Transverse colon (tissue), 4 donors: ENCODE measurements at regions of chr2 and their contacts with region 1.

Region 1: GRCh38 chr2:64330281-64331113 is 123.5 kb upstream of the LGALSL start:
- DNase-seq: peak; percentile 84
- H3K4me3 ChIP-seq: peak overlapping the region in 2 of 4 donors; percentile 7 to 44
- H3K27ac ChIP-seq: peak overlapping the region; percentile 73 to 84 (median 78)
- H3K4me1 ChIP-seq: peaks cover 10 to 38% (median 23%) of the 10 kb centered on the region in 4 donors
- H3K27me3 ChIP-seq: no peaks in the 10 kb centered on the region
- CTCF ChIP-seq: peak; percentile 91 to 97 (median 95)
- EP300 ChIP-seq: no peak
- POLR2A ChIP-seq: no peak

Region 2: DNA sequence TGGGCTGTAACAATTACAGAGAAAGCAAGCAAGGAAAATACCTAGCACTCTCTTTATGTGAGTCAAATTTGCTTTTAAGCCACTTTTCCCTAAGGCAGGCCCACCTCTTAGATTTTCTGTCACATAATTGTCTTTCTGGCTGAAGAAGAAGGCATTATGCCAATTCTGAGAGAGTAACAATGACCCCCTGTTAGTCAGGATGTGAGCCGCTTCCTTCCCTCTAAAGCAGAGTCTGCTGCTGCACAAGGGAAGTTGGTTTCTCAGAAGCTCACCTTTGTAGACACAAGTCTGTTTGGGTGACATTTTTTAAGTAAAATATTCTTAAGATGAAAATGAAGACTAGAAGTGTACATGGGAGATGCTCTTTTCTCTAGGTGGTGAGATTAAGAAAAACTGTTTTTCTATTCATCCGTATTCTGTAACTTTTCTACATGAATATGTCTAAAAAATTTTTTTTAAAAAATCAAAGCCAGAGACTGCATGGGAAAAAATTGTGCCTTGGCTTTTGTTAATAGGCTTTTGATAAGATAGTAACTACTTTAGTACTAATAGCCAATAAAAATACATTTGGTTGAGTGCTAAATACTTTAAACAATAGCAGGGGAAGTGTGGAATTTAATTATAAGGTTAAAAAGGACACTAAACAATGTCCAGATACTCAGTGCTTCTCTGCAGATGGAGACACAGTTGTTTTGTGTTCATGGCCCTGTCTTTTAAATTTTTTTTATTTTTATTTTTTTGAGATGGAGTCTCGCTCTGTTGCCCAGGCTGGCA is 277.8 kb before region 1 on chr2:
- in situ Hi-C with region 1: loop called in 2 of 4 experiments (anchors 5 to 10 kb)
- intact Hi-C with region 1: loop called (anchors 5 kb)
- DNase-seq: no peak
- H3K4me3 ChIP-seq: no peak overlapping the region
- H3K27ac ChIP-seq: no peak overlapping the region
- H3K4me1 ChIP-seq: peaks cover 0 to 8% (median 3%) of the 10 kb centered on the region in 4 donors
- H3K27me3 ChIP-seq: no peaks in the 10 kb centered on the region
- CTCF ChIP-seq: no peak
- EP300 ChIP-seq: no peak
- POLR2A ChIP-seq: no peak

Region 3: DNA sequence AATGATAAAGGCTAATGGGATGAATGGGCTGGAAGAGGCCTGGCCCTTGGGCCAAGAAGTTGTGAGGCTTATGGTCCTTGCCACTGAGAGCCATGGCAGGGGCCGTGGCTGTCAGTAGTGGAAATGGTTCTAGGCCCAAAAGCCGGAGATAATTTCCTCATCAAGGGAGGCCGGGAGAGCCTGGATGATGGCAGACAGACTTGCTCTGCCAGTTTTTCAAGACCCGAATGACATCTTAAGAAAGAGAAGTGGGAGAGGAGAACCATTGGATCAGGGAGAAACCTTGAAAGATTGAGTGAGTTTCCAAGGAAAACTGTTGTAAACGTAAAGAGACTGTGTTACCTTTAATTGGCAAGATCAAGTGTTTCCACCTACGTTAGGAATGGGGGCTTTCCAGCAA is 265.0 kb before region 1 on chr2:
- in situ Hi-C with region 1: no loop called
- intact Hi-C with region 1: no loop called
- DNase-seq: no peak
- H3K4me3 ChIP-seq: no peak overlapping the region
- H3K27ac ChIP-seq: peak overlapping the region in 1 of 4 donors; percentile 5
- H3K4me1 ChIP-seq: peaks cover 3 to 23% (median 16%) of the 10 kb centered on the region in 4 donors
- H3K27me3 ChIP-seq: no peaks in the 10 kb centered on the region
- CTCF ChIP-seq: no peak
- EP300 ChIP-seq: no peak
- POLR2A ChIP-seq: no peak

Region 4: DNA sequence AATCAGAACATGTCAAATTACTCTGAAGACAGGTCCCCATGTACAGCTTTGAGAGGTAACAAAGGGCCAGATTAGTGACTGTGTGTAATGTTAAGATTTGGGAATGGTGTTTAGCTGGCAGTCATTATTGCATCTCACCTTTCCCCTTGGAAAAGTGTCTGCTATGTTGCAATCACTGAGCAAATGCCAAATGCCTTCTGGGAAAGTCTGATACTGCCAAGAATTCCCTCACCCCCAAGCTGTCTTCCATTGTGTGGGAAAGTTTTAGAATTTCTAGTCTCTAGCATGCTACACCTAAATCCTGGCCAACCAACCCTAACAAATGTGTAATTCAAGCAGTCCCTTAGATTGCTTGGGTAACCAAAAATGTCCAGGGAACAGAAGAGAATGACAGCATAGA is 172.7 kb before region 1 on chr2:
- in situ Hi-C with region 1: no loop called
- intact Hi-C with region 1: loop called (anchors 10 kb)
- DNase-seq: no peak
- H3K4me3 ChIP-seq: no peak overlapping the region
- H3K27ac ChIP-seq: no peak overlapping the region
- H3K4me1 ChIP-seq: peaks cover 0 to 15% (median 7%) of the 10 kb centered on the region in 4 donors
- H3K27me3 ChIP-seq: no peaks in the 10 kb centered on the region
- CTCF ChIP-seq: no peak
- EP300 ChIP-seq: no peak
- POLR2A ChIP-seq: no peak

Region 5: DNA sequence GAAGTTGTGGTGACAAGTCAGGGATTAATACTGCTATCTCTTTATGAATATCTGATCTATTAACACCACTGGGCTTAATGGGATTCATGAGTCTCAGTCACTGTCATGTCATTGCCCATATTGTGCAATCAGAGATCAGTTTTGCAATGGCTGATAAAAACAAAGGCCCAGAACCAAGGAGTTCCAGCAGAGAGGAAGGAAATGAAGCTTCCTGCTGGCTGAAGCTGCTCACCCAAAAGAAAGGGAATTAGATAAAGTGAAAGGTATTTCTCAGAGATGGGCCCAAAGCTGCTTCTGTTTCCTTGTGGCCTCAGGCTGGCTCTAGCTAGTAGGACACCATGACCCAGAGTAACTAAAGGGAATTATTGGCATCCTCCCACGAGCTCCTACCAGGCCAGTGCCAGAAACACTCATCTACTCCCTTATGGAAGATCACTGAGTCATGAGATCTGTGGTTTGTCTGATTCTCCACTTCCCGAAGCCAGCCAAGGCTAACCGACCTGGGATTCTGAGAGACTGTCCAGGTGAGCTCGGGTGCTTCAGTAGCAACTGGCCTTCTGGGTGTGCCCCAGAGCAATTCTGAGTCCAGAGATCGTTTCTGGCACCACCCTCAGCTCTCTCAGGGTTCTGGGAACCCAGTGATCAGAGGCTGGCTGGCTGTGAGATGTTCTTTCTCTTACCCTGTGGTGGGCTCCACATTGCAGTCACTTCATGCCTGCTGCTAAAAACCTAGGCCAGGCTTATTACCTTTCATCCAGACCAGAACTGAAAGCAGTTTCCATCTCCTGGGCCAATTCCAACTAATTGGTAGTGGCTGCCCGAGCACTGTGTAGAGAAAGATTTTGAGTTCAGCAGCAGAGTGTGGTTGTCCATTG is 56.7 kb before region 1 on chr2:
- in situ Hi-C with region 1: no loop called
- intact Hi-C with region 1: no loop called
- DNase-seq: peak; percentile 67
- H3K4me3 ChIP-seq: peak overlapping the region in 1 of 4 donors; percentile 21
- H3K27ac ChIP-seq: peak overlapping the region; percentile 73 to 81 (median 79)
- H3K4me1 ChIP-seq: peaks cover 9 to 35% (median 20%) of the 10 kb centered on the region in 4 donors
- H3K27me3 ChIP-seq: no peaks in the 10 kb centered on the region
- CTCF ChIP-seq: no peak
- EP300 ChIP-seq: no peak
- POLR2A ChIP-seq: peak; percentile 35

Region 6: DNA sequence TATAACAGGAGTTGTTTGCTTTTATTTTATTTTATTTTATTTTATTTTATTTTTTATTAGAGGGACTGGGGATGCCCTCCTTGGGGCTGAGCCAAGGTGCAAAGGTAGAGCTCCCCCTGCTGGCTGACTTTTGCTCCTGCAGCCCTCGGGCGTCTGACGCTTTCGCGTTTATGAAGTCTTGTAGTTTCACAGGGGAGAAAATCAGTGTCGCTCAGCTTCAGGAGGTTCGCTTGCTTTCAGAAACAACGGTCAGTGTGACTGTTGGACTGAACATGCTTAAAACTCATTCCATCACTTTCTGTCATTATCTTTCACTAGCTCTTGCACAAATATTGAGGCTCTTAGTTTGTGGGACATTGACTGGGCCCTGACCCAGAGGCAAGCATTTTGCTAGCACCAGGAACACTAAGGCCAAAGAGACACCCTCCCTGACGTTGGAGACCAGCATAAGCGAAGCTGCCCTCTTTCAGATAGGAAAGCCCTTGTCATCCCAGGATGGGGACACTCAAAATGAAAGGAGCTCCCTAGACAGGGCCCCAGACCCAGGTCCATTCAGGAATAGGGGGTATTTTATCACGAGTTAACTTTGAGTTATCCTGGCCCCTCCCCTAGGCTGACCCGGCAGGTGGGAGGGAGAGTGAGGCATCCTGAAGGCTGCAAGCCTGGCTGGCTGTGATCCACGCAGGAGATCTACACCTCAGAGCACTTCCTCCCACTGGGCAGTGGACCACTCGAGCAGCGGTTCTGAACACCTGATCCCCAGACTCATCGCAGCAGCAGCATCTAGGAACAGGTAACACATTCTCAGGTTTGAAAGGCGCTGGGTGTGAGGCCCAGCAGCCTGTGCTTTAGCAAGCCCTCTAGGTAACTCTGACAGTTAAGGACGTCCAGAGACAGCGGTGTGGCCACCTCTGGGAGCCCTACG is 157.8 kb after region 1 on chr2:
- in situ Hi-C with region 1: loop called in 3 of 4 experiments (anchors 5 kb)
- intact Hi-C with region 1: loop called (anchors 1 kb)
- DNase-seq: peak; percentile 78
- H3K4me3 ChIP-seq: no peak overlapping the region
- H3K27ac ChIP-seq: no peak overlapping the region
- H3K4me1 ChIP-seq: peaks cover 0 to 14% (median 5%) of the 10 kb centered on the region in 4 donors
- H3K27me3 ChIP-seq: no peaks in the 10 kb centered on the region
- CTCF ChIP-seq: peak; percentile 96 to 99 (median 98)
- EP300 ChIP-seq: no peak
- POLR2A ChIP-seq: no peak

Region 7: GRCh38 chr2:64562148-64562784 is 231.8 kb after region 1 on chr2:
- in situ Hi-C with region 1: no loop called
- intact Hi-C with region 1: loop called (anchors 2 kb)
- DNase-seq: no peak
- H3K4me3 ChIP-seq: no peak overlapping the region
- H3K27ac ChIP-seq: no peak overlapping the region
- H3K4me1 ChIP-seq: peaks cover 0 to 14% (median 2%) of the 10 kb centered on the region in 4 donors
- H3K27me3 ChIP-seq: no peaks in the 10 kb centered on the region
- CTCF ChIP-seq: peak in 4 of 5 experiments; percentile 34 to 51 (median 39)
- EP300 ChIP-seq: no peak
- POLR2A ChIP-seq: no peak

Region 8: DNA sequence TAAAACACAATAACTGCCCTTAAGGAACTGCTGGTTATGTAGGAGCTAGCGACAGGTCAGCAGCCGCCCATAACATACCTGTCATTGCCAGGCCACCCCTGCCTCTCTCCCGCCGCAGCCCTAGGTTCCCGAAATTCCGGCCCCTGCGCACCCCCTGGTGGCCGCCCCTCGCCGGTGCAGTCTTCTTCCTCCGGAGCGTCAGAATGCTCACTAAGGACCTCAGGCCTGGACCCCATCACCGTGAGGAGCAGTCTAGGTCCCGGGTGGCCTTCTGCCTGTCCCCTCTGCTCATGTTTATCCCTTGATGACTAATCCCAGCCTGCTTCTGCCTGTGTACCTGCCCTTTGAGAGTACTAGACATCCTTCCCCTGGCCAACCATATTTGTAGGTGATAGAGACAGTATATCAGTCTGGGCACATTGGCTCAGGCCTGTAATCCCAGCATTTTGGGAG is 543.0 kb after region 1 on chr2:
- in situ Hi-C with region 1: loop called in 2 of 4 experiments (anchors 25 kb)
- intact Hi-C with region 1: no loop called
- DNase-seq: peak; percentile 84
- H3K4me3 ChIP-seq: peak overlapping the region in 1 of 4 donors; percentile 20
- H3K27ac ChIP-seq: no peak overlapping the region
- H3K4me1 ChIP-seq: peaks cover 0 to 15% (median 6%) of the 10 kb centered on the region in 4 donors
- H3K27me3 ChIP-seq: no peaks in the 10 kb centered on the region
- CTCF ChIP-seq: peak; percentile 92 to 97 (median 95)
- EP300 ChIP-seq: no peak
- POLR2A ChIP-seq: no peak